Activated CD4-positive, alpha-beta memory T cell treated with anti-CD3 and anti-CD28 coated beads, Interleukin-2, amount 10 ng/mL, durations not matched to agents 7 days and 5 days (primary cell): ENCODE measurements at regions of chr1 and their contacts with region 1.

Region 1: GRCh38 chr1:175192630-175193526 is at the start of gene KIAA0040:
- DNase-seq: peak; percentile 65
- H3K4me3 Mint-ChIP-seq: peak within 1 kb of the TSS; percentile 95
- H3K27ac Mint-ChIP-seq: peak within 1 kb of the TSS; percentile 93
- H3K4me1 Mint-ChIP-seq: peaks cover 52% of the 10 kb centered on the region
- H3K27me3 Mint-ChIP-seq: no peaks in the 10 kb centered on the region
- total RNA-seq, gene KIAA0040: 79.4 to 80.2 TPM

Region 2: DNA sequence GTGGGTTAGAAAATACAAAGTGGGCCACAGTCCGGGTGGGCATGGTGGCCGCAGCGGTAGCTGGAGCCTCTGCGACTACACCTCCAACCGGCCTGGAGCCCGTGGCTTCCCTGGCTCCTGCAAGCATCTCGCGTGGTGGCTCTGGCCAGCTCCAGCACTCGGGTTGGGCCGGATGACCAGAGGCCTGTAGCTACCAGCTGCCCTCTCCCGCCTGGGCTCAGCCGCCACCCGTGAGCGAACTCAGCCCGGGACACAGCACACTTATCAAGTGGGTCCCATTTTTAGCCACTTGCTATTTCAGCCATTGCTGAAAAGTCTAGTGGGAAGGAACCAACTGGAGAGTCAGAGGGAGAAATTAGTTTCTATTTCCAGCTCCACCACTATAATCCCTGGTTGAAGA is 300.9 kb before region 1 on chr1:
- CTCF ChIA-PET with region 1: no interaction called
- POLR2A ChIA-PET with region 1: no interaction called
- DNase-seq: no peak
- H3K4me3 Mint-ChIP-seq: no peak overlapping the region
- H3K27ac Mint-ChIP-seq: no peak overlapping the region
- H3K4me1 Mint-ChIP-seq: peaks cover 3% of the 10 kb centered on the region
- H3K27me3 Mint-ChIP-seq: no peaks in the 10 kb centered on the region

Region 3: GRCh38 chr1:175089136-175089718 is 103.7 kb before region 1 on chr1:
- CTCF ChIA-PET with region 1: no interaction called
- POLR2A ChIA-PET with region 1: no interaction called
- DNase-seq: no peak
- H3K4me3 Mint-ChIP-seq: no peak overlapping the region
- H3K27ac Mint-ChIP-seq: no peak overlapping the region
- H3K4me1 Mint-ChIP-seq: no peaks in the 10 kb centered on the region
- H3K27me3 Mint-ChIP-seq: peaks cover 5% of the 10 kb centered on the region

Region 4: DNA sequence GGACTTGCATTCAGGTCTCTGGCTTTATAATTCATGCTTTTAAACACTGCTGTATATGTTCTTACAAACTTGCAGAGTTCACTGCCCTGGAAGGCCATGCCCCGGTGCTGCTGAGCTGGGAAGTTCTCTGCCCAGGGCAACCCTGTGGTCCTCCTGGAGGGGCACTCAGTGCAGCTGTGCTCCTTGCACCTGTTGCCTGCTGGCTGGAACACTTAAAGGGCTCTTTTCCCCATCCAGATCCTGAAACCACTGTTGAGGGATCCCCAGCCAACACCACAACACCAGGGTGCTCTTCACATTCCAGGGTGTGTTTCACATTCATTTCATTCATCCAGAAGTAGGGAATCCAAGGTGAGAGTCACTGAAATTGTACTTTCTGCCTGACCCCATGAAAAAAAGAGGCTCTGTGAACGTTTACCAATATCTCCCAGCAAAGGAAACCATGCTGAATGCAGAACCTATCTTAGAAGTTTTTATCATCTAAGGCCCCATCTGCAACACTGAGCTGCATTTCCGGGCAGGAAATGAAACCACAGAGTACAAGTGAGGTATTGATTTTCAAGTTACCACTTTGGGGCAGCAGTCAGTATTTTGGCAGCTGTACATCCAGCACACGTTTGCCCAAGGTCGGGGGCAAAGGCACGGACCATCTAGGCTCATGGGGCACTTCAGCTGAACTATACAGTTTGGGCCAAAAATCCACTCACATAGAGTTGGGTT is 16.1 kb after region 1 on chr1:
- CTCF ChIA-PET with region 1: interaction called, 33 read pairs
- POLR2A ChIA-PET with region 1: interaction called, 145 read pairs
- DNase-seq: peak; percentile 74
- H3K4me3 Mint-ChIP-seq: peak overlapping the region; percentile 74
- H3K27ac Mint-ChIP-seq: peak overlapping the region; percentile 99
- H3K4me1 Mint-ChIP-seq: peaks cover 54% of the 10 kb centered on the region
- H3K27me3 Mint-ChIP-seq: no peaks in the 10 kb centered on the region